K562 (cell line): ENCODE measurements at regions of chr1 and their contacts with region 1.

Region 1: DNA sequence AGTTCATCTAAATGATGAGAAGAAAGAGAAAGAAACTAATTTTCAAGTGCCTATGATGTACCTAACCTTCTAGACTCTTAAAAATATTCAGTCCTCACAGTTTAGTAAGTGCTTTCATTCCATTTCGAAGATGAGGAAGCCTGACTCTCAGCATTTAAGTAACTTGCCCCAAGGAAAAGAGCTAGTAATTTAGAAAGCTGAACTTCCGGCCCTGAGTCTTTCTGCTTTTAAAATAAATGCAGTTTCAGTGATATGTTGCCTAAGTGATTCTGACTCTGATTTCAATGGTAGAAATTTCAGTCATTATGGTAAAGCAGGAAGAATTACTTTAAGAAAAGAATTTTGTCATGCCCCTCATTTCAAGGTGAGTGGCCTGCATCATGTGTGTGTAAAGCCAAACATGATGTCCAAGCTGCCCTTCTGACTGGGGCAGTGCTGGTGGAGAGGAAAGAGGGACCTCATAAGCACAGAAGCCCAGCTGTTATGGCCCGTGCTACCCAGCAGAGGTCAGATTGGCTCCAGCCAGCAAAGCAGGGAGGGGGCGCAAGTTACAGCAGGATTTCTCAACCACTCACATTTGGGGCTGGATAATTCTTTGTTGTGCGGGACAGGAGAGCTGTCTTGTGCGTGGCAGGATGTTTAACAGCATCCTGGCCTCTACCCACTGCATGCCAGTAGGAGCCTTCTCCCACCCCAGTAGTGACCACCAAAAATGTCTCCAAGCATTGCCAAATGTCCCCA is 10.7 kb downstream of the ATP1A4 start:
- DNase-seq: peak in 3 of 4 experiments; percentile 24 to 45 (median 33)
- ATAC-seq: peak; percentile 92
- H3K4me3 ChIP-seq: no peak overlapping the region
- H3K27ac ChIP-seq: no peak overlapping the region
- H3K4me1 ChIP-seq: peaks cover 0 to 9% of the 10 kb centered on the region in 2 experiments; a peak in 3 of 5 replicates
- H3K27me3 ChIP-seq: peaks cover 9 to 34% of the 10 kb centered on the region in 2 experiments; a peak in 4 of 5 replicates
- CTCF ChIP-seq: peak; percentile 55 to 89 (median 68)
- EP300 ChIP-seq: no peak
- POLR2A ChIP-seq: no peak
- RAD21 ChIP-seq: peak; percentile 14 to 62; a peak in 2 of 4 replicates

Region 2: DNA sequence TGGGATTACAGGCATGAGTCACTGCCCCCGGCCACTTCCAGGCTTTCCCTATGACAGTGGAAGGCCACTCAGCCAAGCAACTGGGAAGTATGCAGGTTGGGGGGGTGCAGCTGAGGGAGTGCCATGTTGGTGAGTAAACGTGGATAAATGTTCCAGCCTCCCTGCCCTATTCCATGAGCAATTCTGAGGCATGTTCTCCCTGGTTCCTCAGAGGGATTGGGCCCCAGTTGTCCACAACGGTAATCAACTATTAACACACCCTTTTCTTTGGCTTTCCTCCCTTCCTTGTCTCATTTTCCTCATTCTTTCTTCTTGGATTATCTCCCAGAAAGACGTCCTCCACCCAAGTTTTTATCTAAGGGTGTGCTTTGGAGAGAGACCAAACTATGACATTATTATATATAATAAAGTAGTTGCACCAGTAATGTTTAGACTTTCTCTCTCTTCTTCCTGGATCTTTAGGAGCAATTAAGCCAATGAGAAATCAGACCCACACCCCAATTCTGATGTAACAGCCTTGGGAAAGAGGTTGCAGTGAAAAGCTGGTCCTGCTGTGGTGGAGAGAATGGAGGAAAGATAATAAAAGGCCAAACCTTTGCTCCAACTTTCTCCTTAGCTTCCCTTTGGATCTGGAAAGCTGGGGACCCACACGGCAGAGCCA is 201.3 kb before region 1 on chr1:
- CTCF ChIA-PET with region 1: no interaction called
- POLR2A ChIA-PET with region 1: no interaction called
- in situ Hi-C with region 1: no loop called
- intact Hi-C with region 1: no loop called
- DNase-seq: no peak
- ATAC-seq: no peak
- H3K4me3 ChIP-seq: no peak overlapping the region
- H3K27ac ChIP-seq: no peak overlapping the region
- H3K4me1 ChIP-seq: peaks cover 26 to 30% of the 10 kb centered on the region in 2 experiments
- H3K27me3 ChIP-seq: peaks cover 2 to 5% of the 10 kb centered on the region in 2 experiments; a peak in 2 of 5 replicates
- CTCF ChIP-seq: no peak
- EP300 ChIP-seq: no peak
- POLR2A ChIP-seq: no peak
- RAD21 ChIP-seq: no peak

Region 3: GRCh38 chr1:160085686-160086455 is 76.3 kb before region 1 on chr1:
- CTCF ChIA-PET with region 1: no interaction called
- POLR2A ChIA-PET with region 1: no interaction called
- in situ Hi-C with region 1: no loop called
- intact Hi-C with region 1: loop called (anchors 1 kb)
- DNase-seq: peak; percentile 86 to 90 (median 88)
- ATAC-seq: peak; percentile 97
- H3K4me3 ChIP-seq: no peak overlapping the region
- H3K27ac ChIP-seq: no peak overlapping the region
- H3K4me1 ChIP-seq: peaks cover 0 to 16% of the 10 kb centered on the region in 2 experiments; a peak in 1 of 5 replicates
- H3K27me3 ChIP-seq: peaks cover 4 to 18% of the 10 kb centered on the region in 2 experiments; a peak in 3 of 5 replicates
- CTCF ChIP-seq: peak; percentile 95 to 97 (median 96)
- EP300 ChIP-seq: no peak
- POLR2A ChIP-seq: no peak
- RAD21 ChIP-seq: peak; percentile 71 to 84